PC-9 (cell line): ENCODE measurements at regions of chr2 and their contacts with region 1.

Region 1: GRCh38 chr2:31831585-31831984 is 179.2 kb downstream of the MEMO1 start:
- DNase-seq: no peak
- H3K4me3 ChIP-seq: no peak overlapping the region
- H3K27ac ChIP-seq: no peak overlapping the region
- H3K4me1 ChIP-seq: 0 out of 2 replicates have a peak, but pooled peaks cover 8% of the 10 kb centered on the region
- H3K27me3 ChIP-seq: no peaks in the 10 kb centered on the region
- CTCF ChIP-seq: no peak

Region 2: GRCh38 chr2:31859959-31860358 is 28.4 kb after region 1 on chr2:
- CTCF ChIA-PET with region 1: no interaction called
- POLR2A ChIA-PET with region 1: interaction called, 10 read pairs
- intact Hi-C with region 1: no loop called
- DNase-seq: no peak
- H3K4me3 ChIP-seq: no peak overlapping the region
- H3K27ac ChIP-seq: no peak overlapping the region
- H3K4me1 ChIP-seq: 0 out of 2 replicates have a peak, but pooled peaks cover 4% of the 10 kb centered on the region
- H3K27me3 ChIP-seq: no peaks in the 10 kb centered on the region
- CTCF ChIP-seq: no peak